GM18951 (cell line): ENCODE measurements at regions of chr12 and their contacts with region 1.

Region 1: GRCh38 chr12:51070004-51070403 is 13.4 kb downstream of the CSRNP2 start:
- POLR2A ChIP-seq: no peak

Region 2: GRCh38 chr12:51341259-51342007 is 271.4 kb after region 1 on chr12:
- in situ Hi-C with region 1: loop called (anchors 25 kb)
- POLR2A ChIP-seq: no peak